Panc1 (cell line): ENCODE measurements at regions of chr12 and their contacts with region 1.

Region 1: GRCh38 chr12:56084958-56085543 is 5.1 kb downstream of the ERBB3 start:
- DNase-seq: no peak
- ATAC-seq: peak; percentile 60; the same call in 1 of the 2 replicates
- H3K4me3 ChIP-seq: no peak overlapping the region
- H3K27ac ChIP-seq: no peak overlapping the region
- H3K4me1 ChIP-seq: no peaks in the 10 kb centered on the region
- H3K27me3 ChIP-seq: no peaks in the 10 kb centered on the region
- CTCF ChIP-seq: peak; percentile 82

Region 2: GRCh38 chr12:56007564-56008559 is 77.2 kb before region 1 on chr12:
- CTCF ChIA-PET with region 1: no interaction called
- POLR2A ChIA-PET with region 1: interaction called, 15 read pairs
- in situ Hi-C with region 1: no loop called
- intact Hi-C with region 1: no loop called
- DNase-seq: no peak
- ATAC-seq: peak; percentile 84
- H3K4me3 ChIP-seq: peak overlapping the region; percentile 63 to 80
- H3K27ac ChIP-seq: peak overlapping the region; percentile 65
- H3K4me1 ChIP-seq: peaks cover 5% of the 10 kb centered on the region; the same call in 1 of the 2 replicates
- H3K27me3 ChIP-seq: no peaks in the 10 kb centered on the region
- CTCF ChIP-seq: no peak